Activated CD8-positive, alpha-beta T cell treated with anti-CD3 and anti-CD28 coated beads for 36 hours (primary cell): ENCODE measurements at regions of chr20 and their contacts with region 1.

Region 1: DNA sequence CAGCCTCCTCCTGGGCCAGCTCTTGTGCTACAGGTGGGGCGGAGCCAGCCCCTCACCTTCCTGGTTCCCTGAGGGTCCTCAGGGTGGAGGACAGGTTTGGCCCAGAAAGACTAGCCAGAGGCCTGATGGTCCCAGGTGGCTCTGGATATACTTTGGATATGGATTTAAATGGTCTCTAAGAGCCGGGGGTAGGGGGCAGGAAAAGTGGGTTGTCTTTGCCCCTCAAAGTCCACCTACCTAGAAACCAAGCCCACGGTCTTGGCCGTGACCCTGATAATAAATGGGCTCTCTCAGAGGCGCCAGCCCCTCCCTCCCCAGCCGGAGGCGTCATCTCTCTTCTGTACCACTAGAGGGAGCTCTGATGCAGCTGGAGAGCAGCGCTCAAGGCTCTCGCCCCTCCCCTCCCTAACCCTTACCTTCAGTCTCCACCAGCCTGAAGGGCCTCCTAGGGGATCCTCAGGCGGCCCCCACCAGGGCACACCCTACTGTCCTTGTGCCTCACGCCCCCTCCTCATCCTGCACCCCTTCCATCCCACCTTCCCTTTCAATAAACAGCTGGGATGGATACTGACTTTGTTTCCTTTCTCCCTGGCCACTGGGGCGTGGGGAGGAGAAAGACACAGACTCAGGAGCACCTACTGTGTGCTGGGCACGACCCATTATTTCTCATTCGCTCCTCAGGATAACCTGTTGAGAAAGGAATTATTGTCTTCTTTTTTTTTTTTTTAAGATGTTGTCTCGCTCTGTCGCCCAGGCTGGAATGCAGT is 7.6 kb downstream of the NRSN2 start:
- DNase-seq: peak; percentile 83
- ATAC-seq: peak; percentile 100
- H3K4me3 Mint-ChIP-seq: no peak overlapping the region
- H3K27ac Mint-ChIP-seq: no peak overlapping the region
- H3K4me1 Mint-ChIP-seq: no peaks in the 10 kb centered on the region
- H3K27me3 Mint-ChIP-seq: peaks cover 2% of the 10 kb centered on the region
- CTCF ChIP-seq: peak; percentile 92

Region 2: DNA sequence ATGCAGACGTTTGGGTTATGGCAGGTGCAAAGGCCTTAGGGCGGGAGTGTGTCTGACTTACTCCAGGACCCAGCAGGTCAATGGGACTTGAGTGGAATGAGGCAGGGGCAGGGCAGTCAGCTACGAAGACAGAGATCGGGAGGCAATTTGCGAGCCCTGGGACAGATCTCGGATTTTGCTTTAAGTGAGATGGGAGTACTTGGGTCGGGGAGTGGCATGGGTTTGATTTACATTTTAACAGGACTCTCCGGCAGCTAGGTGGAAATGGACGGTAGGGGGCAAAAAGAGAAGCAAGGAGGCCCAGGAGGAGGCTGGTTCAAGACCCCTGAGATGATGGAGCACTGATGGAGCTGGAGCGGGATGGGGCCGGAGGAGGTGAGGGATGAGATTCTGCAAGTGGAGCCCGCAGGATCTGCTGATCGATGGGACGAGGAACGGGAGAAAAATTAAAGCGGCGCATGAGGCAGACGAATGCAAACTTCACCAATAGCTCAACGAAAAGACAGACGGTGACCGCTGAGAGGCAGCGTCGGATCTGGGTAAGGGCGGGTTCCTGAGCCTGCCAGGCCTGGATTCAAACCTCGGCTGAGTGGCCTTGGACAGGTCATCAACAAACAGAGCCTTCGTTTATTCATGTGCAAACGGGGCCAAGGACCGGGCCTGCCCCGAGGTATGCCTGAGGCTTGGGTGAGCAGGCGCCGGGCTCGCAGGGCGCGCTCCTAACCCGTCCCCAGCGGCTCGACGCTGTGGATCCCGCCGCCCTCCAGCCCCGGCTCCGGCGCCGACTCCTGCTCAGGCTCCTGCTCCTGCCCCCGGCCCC is 52.9 kb after region 1 on chr20:
- CTCF ChIA-PET with region 1: interaction called, 11 read pairs
- POLR2A ChIA-PET with region 1: interaction called, 6 read pairs
- intact Hi-C with region 1: no loop called
- DNase-seq: peak; percentile 75
- ATAC-seq: peak; percentile 74
- H3K4me3 Mint-ChIP-seq: peak overlapping the region; percentile 82
- H3K27ac Mint-ChIP-seq: peak overlapping the region; percentile 95
- H3K4me1 Mint-ChIP-seq: peaks cover 43% of the 10 kb centered on the region
- H3K27me3 Mint-ChIP-seq: no peaks in the 10 kb centered on the region
- CTCF ChIP-seq: no peak

Region 3: GRCh38 chr20:431012-431904 is 76.8 kb after region 1 on chr20:
- CTCF ChIA-PET with region 1: interaction called, 15 read pairs
- POLR2A ChIA-PET with region 1: interaction called, 3 read pairs
- intact Hi-C with region 1: no loop called
- DNase-seq: peak; percentile 67
- ATAC-seq: no peak
- H3K4me3 Mint-ChIP-seq: no peak overlapping the region
- H3K27ac Mint-ChIP-seq: peak overlapping the region; percentile 86
- H3K4me1 Mint-ChIP-seq: peaks cover 65% of the 10 kb centered on the region
- H3K27me3 Mint-ChIP-seq: no peaks in the 10 kb centered on the region
- CTCF ChIP-seq: peak; percentile 22

Region 4: GRCh38 chr20:462199-462991 is 107.9 kb after region 1 on chr20 and contains the start of gene TBC1D20:
- CTCF ChIA-PET with region 1: interaction called, 10 read pairs
- POLR2A ChIA-PET with region 1: interaction called, 4 read pairs
- intact Hi-C with region 1: no loop called
- DNase-seq: peak; percentile 84
- ATAC-seq: peak; percentile 94
- H3K4me3 Mint-ChIP-seq: peak within 1 kb of the TSS; percentile 87
- H3K27ac Mint-ChIP-seq: peak within 1 kb of the TSS; percentile 88
- H3K4me1 Mint-ChIP-seq: peaks cover 39% of the 10 kb centered on the region
- H3K27me3 Mint-ChIP-seq: no peaks in the 10 kb centered on the region
- CTCF ChIP-seq: no peak
- total RNA-seq, gene TBC1D20: 22.2 to 23.8 TPM

Region 5: DNA sequence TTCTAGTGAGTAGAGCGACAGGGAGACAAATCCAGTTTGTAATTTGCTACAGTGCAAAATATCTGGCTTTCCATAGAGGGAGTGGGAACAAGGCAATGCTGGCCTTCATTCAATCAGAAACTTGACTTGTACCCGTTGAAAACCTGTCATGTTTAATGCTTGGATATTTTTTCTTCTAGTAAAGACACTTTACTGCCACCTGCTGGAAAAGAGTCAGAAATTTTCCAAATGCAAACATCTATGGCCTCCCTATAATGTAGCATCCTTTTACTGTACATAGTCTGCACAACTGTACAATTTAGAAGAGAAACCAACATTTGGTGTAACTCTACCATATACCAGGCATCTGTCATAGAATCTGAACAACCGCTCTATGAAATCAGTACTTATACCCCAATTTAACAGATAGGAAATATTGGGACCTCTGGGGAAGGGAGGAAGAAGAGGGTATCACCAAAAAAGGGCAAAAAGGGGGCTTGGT is 124.5 kb after region 1 on chr20:
- CTCF ChIA-PET with region 1: interaction called, 16 read pairs
- POLR2A ChIA-PET with region 1: interaction called, 3 read pairs
- intact Hi-C with region 1: loop called (anchors 1 kb)
- DNase-seq: peak; percentile 38
- ATAC-seq: peak; percentile 72
- H3K4me3 Mint-ChIP-seq: no peak overlapping the region
- H3K27ac Mint-ChIP-seq: no peak overlapping the region
- H3K4me1 Mint-ChIP-seq: peaks cover 18% of the 10 kb centered on the region
- H3K27me3 Mint-ChIP-seq: no peaks in the 10 kb centered on the region
- CTCF ChIP-seq: peak; percentile 84